BJ (cell line): ENCODE measurements at regions of chr13 and their contacts with region 1.

Region 1: GRCh38 chr13:29472332-29472961 is 123.0 kb downstream of the SLC7A1 start:
- DNase-seq: no peak
- H3K4me3 ChIP-seq: no peak overlapping the region
- H3K27me3 ChIP-seq: 0 out of 2 replicates have a peak, but pooled peaks cover 2% of the 10 kb centered on the region
- CTCF ChIP-seq: peak; percentile 99

Region 2: GRCh38 chr13:29458419-29458818 is 14.0 kb before region 1 on chr13:
- CTCF ChIA-PET with region 1: interaction called, 10 read pairs
- POLR2A ChIA-PET with region 1: no interaction called
- DNase-seq: no peak
- H3K4me3 ChIP-seq: no peak overlapping the region
- H3K27me3 ChIP-seq: peaks cover 12% of the 10 kb centered on the region
- CTCF ChIP-seq: no peak

Region 3: GRCh38 chr13:29496240-29496712 is 23.8 kb after region 1 on chr13:
- CTCF ChIA-PET with region 1: interaction called, 10 read pairs
- POLR2A ChIA-PET with region 1: no interaction called
- DNase-seq: no peak
- H3K4me3 ChIP-seq: no peak overlapping the region
- H3K27me3 ChIP-seq: peaks cover 10% of the 10 kb centered on the region
- CTCF ChIP-seq: no peak

Region 4: GRCh38 chr13:29707876-29708543 is 235.6 kb after region 1 on chr13:
- CTCF ChIA-PET with region 1: interaction called, 17 read pairs
- POLR2A ChIA-PET with region 1: no interaction called
- DNase-seq: no peak
- H3K4me3 ChIP-seq: no peak overlapping the region
- H3K27me3 ChIP-seq: no peaks in the 10 kb centered on the region
- CTCF ChIP-seq: peak; percentile 83